ENCODE measurements at regions of chr21 and their contacts with region 1.

Region 1: DNA sequence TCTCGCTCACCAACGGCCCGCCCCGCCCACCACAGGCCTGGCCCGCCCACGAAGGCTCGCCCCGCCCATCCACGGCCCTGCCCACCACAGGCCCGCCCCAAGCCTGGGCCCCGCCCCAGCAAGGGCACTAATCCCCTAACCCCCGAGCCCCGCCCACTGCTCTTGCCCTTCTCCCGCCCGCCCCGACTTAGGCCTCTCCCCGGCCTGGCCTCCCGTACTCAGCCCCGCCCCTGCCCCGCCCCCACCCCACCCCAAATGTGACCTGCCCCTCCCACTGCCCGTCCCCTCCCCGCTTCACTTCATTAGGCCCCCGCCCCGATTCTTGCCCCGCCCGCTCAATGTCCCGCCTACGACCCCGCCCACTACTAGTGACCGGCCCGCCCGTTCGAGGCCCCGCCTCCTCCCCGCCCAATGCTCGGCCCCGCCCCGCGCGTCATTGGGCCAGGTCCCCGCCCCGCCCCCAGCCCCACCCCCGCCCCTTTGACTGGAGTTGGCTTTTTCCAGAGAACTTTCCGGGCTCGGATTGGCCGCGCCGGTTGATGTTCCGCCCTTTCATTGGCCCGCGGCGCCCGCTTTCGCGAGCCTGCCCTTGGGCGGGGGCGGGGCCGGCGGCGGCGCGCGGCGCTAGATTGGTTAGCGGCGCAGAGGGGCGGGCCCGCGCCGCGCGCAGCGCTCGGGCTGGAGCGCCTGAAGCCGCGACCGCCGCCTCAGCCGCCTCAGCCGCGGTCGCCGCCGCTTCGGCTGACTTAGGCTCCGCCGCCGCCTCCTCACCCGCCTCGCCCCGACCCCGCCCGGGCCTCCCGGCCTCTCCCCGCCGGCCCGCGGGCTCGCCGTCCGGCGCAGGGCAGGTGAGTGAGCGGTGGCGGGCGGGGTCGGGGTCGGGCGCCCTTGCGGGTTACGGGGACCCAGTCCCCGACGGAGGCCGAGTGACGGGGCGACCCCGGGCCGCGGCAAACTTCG is at the start of gene PCBP3:
- DNase-seq: peak; percentile 94
- H3K4me3 Mint-ChIP-seq: peak within 1 kb of the TSS; percentile 83
- H3K27ac Mint-ChIP-seq: peak within 1 kb of the TSS; percentile 63
- H3K4me1 Mint-ChIP-seq: peaks cover 15% of the 10 kb centered on the region
- H3K27me3 Mint-ChIP-seq: peaks cover 10% of the 10 kb centered on the region
- total RNA-seq, gene PCBP3: 8.2 and 10.7 TPM in 2 replicates

Region 2: GRCh38 chr21:44817506-44817880 is 825.8 kb before region 1 on chr21:
- intact Hi-C with region 1: loop called (anchors 5 kb)
- DNase-seq: peak; percentile 92
- H3K4me3 Mint-ChIP-seq: peak overlapping the region; percentile 66
- H3K27ac Mint-ChIP-seq: no peak overlapping the region
- H3K4me1 Mint-ChIP-seq: peaks cover 11% of the 10 kb centered on the region
- H3K27me3 Mint-ChIP-seq: no peaks in the 10 kb centered on the region

Region 3: GRCh38 chr21:45554477-45555175 is 88.7 kb before region 1 on chr21:
- intact Hi-C with region 1: loop called (anchors 1 kb)
- DNase-seq: peak; percentile 88
- H3K4me3 Mint-ChIP-seq: peak overlapping the region; percentile 91
- H3K27ac Mint-ChIP-seq: peak overlapping the region; percentile 93
- H3K4me1 Mint-ChIP-seq: peaks cover 22% of the 10 kb centered on the region
- H3K27me3 Mint-ChIP-seq: peaks cover 3% of the 10 kb centered on the region

Region 4: DNA sequence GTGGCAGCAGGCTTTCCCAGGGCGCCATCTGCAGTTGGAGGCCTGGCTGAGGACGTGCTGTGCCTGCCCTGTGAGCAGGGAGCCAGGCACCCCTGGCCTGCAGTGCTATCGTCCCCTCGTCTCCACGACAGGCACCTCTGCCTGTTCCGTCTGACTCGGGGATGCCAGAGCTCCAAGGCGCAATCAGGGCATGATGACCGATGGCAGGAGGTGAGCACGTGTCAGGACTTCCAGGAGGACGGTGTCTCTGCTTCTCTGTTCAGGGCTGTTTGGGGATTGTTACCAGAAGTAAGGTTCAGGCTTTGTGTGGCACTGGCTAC is 125.4 kb after region 1 on chr21:
- intact Hi-C with region 1: loop called (anchors 1 kb)
- DNase-seq: no peak
- H3K4me3 Mint-ChIP-seq: peak overlapping the region; percentile 25
- H3K27ac Mint-ChIP-seq: peak overlapping the region; percentile 95
- H3K4me1 Mint-ChIP-seq: peaks cover 36% of the 10 kb centered on the region
- H3K27me3 Mint-ChIP-seq: no peaks in the 10 kb centered on the region